A673 (cell line): ENCODE measurements at regions of chr10 and their contacts with region 1.

Region 1: DNA sequence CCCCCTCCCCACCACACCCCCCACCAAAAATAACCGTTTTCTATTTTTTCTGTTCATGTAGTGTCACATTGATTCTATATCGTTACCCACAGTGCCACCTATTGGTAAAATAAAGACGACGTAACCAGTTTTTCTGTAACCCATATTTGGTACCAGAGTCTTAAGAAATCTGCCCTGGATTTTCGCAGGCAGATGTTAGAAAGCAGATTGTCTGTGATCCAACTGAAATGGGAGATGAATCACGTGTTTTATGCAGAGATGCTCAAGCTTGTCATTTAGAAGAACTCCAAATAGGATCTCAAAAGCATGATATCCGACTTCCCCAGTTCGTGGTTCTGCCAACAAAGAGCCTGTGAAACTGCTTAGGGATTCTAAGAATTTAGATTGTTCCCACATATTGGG is 261.1 kb upstream of the CSTF2T start:
- DNase-seq: peak; percentile 52
- H3K4me3 ChIP-seq: no peak overlapping the region
- H3K27ac ChIP-seq: no peak overlapping the region
- H3K4me1 ChIP-seq: no peaks in the 10 kb centered on the region
- H3K27me3 ChIP-seq: peaks cover 5% of the 10 kb centered on the region
- CTCF ChIP-seq: peak; percentile 63

Region 2: GRCh38 chr10:51010977-51011376 is 949.5 kb before region 1 on chr10:
- CTCF ChIA-PET with region 1: no interaction called
- POLR2A ChIA-PET with region 1: no interaction called
- intact Hi-C with region 1: loop called (anchors 5 kb)
- DNase-seq: peak; percentile 62
- H3K4me3 ChIP-seq: no peak overlapping the region
- H3K27ac ChIP-seq: no peak overlapping the region
- H3K4me1 ChIP-seq: no peaks in the 10 kb centered on the region
- H3K27me3 ChIP-seq: peaks cover 9% of the 10 kb centered on the region
- CTCF ChIP-seq: peak; percentile 81

Region 3: DNA sequence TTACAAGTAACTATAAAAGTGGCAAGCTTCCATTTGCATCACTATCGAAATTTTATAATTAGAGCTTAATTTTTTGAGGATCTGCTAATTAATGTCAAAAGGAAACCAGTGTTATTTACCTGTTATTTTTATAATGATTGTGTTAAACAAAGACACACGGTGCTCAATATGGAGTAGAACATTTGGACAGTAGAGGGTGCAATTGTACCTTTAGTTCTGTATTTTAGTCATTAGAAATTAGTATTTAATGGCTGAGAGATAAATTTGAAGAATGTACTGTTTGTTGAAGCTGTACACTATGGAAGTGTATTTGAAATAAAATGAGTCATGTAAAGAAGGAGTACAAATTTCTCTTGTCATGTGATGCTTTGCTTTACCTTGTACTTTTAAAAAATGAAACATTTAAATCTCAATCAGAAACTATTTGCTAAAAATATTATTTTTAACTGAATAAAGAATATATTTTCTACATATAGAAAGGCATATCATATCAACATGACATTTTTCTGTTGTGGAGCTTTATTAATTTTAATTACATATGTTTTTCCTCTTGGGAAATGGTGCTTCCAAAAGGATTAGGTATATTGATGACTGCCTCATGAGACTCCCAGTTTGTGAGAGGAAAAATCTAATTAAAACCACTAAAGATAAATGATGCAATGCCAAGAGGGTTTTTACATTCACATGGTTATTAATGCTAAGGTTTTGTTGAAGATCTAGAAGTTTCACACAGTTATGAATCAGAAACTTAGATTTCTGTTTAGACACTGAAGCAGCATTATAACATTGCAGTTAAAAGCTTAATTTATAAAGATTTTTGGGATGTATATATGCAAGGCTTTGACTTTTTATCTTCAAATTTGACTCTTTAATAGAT is 896.6 kb before region 1 on chr10:
- CTCF ChIA-PET with region 1: no interaction called
- POLR2A ChIA-PET with region 1: no interaction called
- intact Hi-C with region 1: loop called (anchors 5 kb)
- DNase-seq: peak; percentile 44
- H3K4me3 ChIP-seq: no peak overlapping the region
- H3K27ac ChIP-seq: no peak overlapping the region
- H3K4me1 ChIP-seq: no peaks in the 10 kb centered on the region
- H3K27me3 ChIP-seq: peaks cover 13% of the 10 kb centered on the region
- CTCF ChIP-seq: peak; percentile 59

Region 4: DNA sequence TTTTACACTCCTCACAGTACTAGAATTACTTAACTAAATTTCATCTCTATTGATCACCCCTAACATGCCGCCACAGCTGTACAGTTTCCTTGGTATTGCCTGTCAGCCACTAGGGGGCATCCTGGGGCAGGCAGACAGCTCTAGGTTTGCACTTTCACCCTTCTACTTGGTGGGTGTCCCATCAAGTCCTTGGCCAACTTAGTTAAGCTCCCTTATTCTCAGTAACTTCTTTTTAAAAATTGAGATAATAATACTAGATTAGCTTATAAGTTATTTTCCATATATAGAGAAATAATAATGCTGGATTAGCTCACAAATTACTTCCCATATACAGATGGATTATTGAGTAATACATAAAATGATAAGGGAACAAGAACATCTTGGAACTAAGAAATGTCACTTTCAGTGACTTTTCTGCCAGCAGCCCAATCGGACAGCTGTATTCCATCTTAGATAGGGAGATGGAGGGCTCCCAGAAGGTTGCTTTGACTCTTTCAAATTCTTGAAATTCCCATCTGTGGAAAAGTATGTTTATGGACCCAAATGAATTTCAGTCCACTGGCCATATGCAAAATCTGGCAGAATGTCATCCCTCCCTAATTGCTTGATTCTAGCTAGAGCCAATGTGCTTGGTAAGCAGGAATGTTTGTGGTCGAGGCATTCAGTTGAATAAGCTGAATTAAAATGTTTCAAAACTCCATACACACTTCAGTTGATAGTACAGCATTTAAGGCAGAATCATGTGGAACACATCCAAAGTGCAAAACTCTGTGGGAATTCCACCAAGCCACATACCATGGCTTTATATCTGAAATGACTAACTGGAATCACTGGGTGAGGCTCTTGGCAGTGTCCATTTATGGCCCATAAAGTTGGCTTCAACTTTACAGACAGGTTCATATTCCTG is 570.8 kb before region 1 on chr10:
- CTCF ChIA-PET with region 1: interaction called, 3 read pairs
- POLR2A ChIA-PET with region 1: no interaction called
- intact Hi-C with region 1: loop called (anchors 2 kb)
- DNase-seq: peak; percentile 66
- H3K4me3 ChIP-seq: no peak overlapping the region
- H3K27ac ChIP-seq: no peak overlapping the region
- H3K4me1 ChIP-seq: no peaks in the 10 kb centered on the region
- H3K27me3 ChIP-seq: no peaks in the 10 kb centered on the region
- CTCF ChIP-seq: peak; percentile 93

Region 5: GRCh38 chr10:51907361-51907760 is 53.1 kb before region 1 on chr10:
- CTCF ChIA-PET with region 1: no interaction called
- POLR2A ChIA-PET with region 1: no interaction called
- intact Hi-C with region 1: loop called (anchors 5 kb)
- DNase-seq: no peak
- H3K4me3 ChIP-seq: no peak overlapping the region
- H3K27ac ChIP-seq: no peak overlapping the region
- H3K4me1 ChIP-seq: no peaks in the 10 kb centered on the region
- H3K27me3 ChIP-seq: no peaks in the 10 kb centered on the region
- CTCF ChIP-seq: no peak

Region 6: GRCh38 chr10:52215745-52216361 is 255.4 kb after region 1 on chr10:
- CTCF ChIA-PET with region 1: no interaction called
- POLR2A ChIA-PET with region 1: no interaction called
- intact Hi-C with region 1: loop called (anchors 10 kb)
- DNase-seq: peak; percentile 77
- H3K4me3 ChIP-seq: no peak overlapping the region
- H3K27ac ChIP-seq: no peak overlapping the region
- H3K4me1 ChIP-seq: peaks cover 18% of the 10 kb centered on the region
- H3K27me3 ChIP-seq: no peaks in the 10 kb centered on the region
- CTCF ChIP-seq: peak; percentile 81